ENCODE measurements at regions of chr7 and their contacts with region 1.

Region 1: DNA sequence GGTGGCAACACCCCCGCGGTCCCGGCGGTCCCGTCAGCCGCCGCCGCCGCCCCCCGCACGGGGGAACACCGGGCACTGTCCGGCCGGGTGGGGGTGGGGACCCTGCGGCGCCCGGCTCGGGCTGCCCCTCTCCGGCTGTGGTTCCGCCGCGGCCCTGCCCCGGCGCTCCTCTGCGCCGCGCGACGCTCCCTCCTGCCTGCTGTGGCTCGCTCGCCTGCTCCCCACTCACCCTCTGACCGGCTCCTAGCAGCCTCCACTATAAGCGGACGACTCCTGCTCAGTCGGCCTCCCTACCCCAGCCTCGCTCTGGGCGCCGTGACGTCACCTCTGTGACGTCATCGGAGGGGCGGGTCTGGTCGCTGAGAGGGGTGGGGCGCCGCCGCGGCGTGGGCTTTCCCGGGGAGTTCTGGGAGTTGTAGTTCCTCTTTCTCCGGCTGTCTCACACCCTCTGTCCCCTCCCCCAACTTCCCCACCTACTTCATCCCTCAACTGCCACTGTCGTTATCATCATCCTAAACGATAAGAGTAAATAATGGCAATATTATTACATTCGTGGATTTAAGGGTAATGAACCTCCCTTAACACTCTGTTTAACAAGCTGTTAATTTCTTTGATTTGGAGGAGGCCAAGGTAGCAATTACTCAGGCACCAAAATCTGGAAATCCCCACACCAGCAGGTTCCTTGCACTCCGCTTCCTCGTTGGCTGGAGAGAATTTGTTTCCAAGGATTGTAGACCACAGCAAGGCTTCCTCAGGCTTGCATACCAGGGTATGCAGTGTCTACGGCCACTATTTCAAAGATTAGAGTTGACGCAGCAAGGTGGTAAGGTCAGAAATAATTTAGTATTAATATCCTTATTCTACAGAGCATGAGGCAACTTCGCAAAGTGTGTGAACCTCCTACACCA is at the start of gene UBE2H:
- DNase-seq: peak; percentile 89
- H3K4me3 Mint-ChIP-seq: no peak within 1 kb of the TSS
- H3K27ac Mint-ChIP-seq: no peak within 1 kb of the TSS
- H3K4me1 Mint-ChIP-seq: peaks cover 19% of the 10 kb centered on the region
- H3K27me3 Mint-ChIP-seq: no peaks in the 10 kb centered on the region
- CTCF ChIP-seq: no peak
- total RNA-seq, gene UBE2H: 103 and 115 TPM in 2 replicates

Region 2: DNA sequence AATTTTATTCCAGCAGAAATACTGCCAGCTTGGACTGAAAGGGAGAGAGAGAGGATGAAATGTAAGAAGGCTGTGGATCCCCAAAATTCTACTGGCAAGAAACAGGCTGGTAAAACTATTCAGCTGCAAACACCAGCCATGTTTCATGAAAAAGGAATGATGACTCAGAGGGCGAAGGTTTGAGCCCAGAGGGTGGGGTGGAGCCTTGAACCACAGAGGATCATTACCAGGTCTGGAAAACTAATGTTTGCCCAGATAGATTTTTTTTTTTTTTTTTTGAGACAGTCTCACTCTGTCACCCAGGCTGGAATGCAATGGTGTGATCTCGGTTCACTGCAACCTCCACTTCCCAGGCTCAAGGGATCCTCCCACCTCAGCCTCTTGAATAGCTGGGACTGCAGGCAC is 383.1 kb before region 1 on chr7:
- CTCF ChIA-PET with region 1: no interaction called
- intact Hi-C with region 1: no loop called
- DNase-seq: peak; percentile 76
- H3K4me3 Mint-ChIP-seq: peak overlapping the region; percentile 7
- H3K27ac Mint-ChIP-seq: no peak overlapping the region
- H3K4me1 Mint-ChIP-seq: peaks cover 31% of the 10 kb centered on the region
- H3K27me3 Mint-ChIP-seq: no peaks in the 10 kb centered on the region
- CTCF ChIP-seq: no peak

Region 3: GRCh38 chr7:129702316-129702715 is 250.6 kb before region 1 on chr7:
- CTCF ChIA-PET with region 1: no interaction called
- intact Hi-C with region 1: no loop called
- DNase-seq: no peak
- H3K4me3 Mint-ChIP-seq: no peak overlapping the region
- H3K27ac Mint-ChIP-seq: no peak overlapping the region
- H3K4me1 Mint-ChIP-seq: peaks cover 19% of the 10 kb centered on the region
- H3K27me3 Mint-ChIP-seq: no peaks in the 10 kb centered on the region
- CTCF ChIP-seq: no peak

Region 4: GRCh38 chr7:129804890-129805719 is 147.8 kb before region 1 on chr7:
- CTCF ChIA-PET with region 1: no interaction called
- intact Hi-C with region 1: no loop called
- DNase-seq: no peak
- H3K4me3 Mint-ChIP-seq: no peak overlapping the region
- H3K27ac Mint-ChIP-seq: no peak overlapping the region
- H3K4me1 Mint-ChIP-seq: no peaks in the 10 kb centered on the region
- H3K27me3 Mint-ChIP-seq: peaks cover 12% of the 10 kb centered on the region
- CTCF ChIP-seq: no peak

Region 5: DNA sequence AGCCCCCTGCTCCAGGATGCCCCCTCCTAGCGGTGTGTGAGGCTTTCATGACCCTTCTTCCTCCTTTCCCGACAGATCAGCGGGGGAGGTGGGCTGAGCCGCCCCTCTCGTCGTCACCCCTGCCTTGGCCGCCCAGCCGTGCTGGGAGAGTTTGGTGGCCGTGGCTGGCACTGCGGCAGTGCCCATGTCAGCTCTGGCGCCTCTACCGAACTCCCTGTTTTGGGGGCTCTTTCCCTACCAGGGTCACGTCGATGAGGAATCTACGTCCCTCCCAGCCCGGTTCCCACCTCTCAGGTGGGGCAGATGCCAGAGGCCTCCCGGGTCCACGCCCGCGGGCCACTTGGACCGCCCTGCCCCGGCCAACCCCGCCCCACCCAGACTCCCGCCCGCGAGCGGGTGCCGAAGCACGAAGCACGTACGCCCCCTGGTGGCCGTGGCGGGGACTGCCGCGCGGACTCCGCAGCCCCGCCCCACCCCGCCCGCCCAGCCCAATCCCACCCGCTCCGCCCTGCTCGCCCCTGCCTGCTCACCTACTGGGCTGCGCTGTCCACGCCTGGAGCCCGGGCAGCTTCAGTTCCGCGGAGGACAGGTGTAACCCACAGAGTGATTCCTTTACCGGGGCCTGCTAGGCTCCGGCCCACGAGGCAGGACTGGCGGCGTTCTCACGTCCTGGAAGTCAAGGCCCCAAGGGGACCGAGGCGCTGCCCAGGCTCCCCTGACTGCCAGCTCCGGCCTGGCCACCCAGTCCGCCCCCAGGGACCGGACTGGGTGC is 127.2 kb before region 1 on chr7:
- CTCF ChIA-PET with region 1: no interaction called
- intact Hi-C with region 1: loop called (anchors 5 kb)
- DNase-seq: peak; percentile 95
- H3K4me3 Mint-ChIP-seq: peak overlapping the region; percentile 92
- H3K27ac Mint-ChIP-seq: peak overlapping the region; percentile 87
- H3K4me1 Mint-ChIP-seq: peaks cover 13% of the 10 kb centered on the region
- H3K27me3 Mint-ChIP-seq: no peaks in the 10 kb centered on the region
- CTCF ChIP-seq: peak; percentile 95

Region 6: DNA sequence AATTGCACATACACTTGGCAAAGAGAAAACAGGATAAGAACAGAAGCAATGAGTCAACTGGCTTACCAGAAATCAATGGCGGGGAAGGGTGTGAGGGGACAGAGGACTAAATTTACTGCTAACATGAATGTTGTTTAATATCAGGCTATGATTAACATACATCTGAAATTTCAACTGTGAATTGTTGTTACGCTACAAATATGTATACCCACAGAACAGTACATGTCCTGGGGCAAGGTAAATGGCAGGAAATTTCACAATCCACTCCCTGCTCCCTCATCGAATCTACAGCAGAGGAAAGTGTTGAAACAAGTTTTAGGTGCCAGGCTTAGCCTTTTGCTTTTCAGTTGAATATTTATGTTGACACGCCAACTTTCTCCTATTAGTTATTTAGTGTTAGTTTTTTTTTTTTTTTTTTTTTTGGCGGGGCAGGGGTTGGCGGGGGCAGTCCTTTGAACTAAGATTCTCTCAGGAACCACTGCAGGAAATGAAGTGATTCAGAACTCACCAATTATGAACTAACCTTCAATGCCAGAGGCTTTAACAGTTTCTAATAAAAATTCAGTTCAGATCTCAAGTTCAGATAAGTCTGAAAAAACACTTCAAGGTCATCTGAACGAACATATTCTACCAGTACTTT is 99.1 kb before region 1 on chr7:
- CTCF ChIA-PET with region 1: no interaction called
- intact Hi-C with region 1: loop called (anchors 5 kb)
- DNase-seq: peak; percentile 22
- H3K4me3 Mint-ChIP-seq: peak overlapping the region; percentile 39
- H3K27ac Mint-ChIP-seq: peak overlapping the region; percentile 23
- H3K4me1 Mint-ChIP-seq: peaks cover 67% of the 10 kb centered on the region
- H3K27me3 Mint-ChIP-seq: no peaks in the 10 kb centered on the region
- CTCF ChIP-seq: no peak

Region 7: DNA sequence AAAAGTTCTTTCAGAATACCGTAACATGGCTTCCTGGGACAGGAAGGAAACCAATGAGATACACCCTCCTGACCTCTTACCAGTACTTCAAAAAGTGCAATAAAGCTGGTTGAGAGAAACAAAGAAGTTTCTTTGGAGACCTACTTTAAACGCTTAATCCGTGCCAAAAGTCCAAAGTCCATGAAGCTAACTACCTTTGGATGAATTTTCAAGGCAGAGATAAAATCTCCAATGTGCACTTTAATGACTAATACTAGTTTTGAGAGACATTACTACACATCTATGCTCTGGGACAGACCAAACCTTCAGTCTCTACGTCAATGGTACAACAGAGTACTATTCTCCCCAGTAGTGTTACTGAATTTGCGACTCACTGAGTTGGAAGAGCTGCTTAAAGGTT is 46.2 kb before region 1 on chr7:
- CTCF ChIA-PET with region 1: interaction called, 7 read pairs
- intact Hi-C with region 1: loop called (anchors 2 kb)
- DNase-seq: peak; percentile 55
- H3K4me3 Mint-ChIP-seq: peak overlapping the region; percentile 60
- H3K27ac Mint-ChIP-seq: peak overlapping the region; percentile 73
- H3K4me1 Mint-ChIP-seq: peaks cover 79% of the 10 kb centered on the region
- H3K27me3 Mint-ChIP-seq: no peaks in the 10 kb centered on the region
- CTCF ChIP-seq: no peak

Region 8: GRCh38 chr7:130108809-130109208 is 155.9 kb after region 1 on chr7:
- CTCF ChIA-PET with region 1: no interaction called
- intact Hi-C with region 1: no loop called
- DNase-seq: no peak
- H3K4me3 Mint-ChIP-seq: no peak overlapping the region
- H3K27ac Mint-ChIP-seq: no peak overlapping the region
- H3K4me1 Mint-ChIP-seq: peaks cover 17% of the 10 kb centered on the region
- H3K27me3 Mint-ChIP-seq: no peaks in the 10 kb centered on the region
- CTCF ChIP-seq: no peak